ENCODE measurements at regions of chr20 and their contacts with region 1.

Region 1: DNA sequence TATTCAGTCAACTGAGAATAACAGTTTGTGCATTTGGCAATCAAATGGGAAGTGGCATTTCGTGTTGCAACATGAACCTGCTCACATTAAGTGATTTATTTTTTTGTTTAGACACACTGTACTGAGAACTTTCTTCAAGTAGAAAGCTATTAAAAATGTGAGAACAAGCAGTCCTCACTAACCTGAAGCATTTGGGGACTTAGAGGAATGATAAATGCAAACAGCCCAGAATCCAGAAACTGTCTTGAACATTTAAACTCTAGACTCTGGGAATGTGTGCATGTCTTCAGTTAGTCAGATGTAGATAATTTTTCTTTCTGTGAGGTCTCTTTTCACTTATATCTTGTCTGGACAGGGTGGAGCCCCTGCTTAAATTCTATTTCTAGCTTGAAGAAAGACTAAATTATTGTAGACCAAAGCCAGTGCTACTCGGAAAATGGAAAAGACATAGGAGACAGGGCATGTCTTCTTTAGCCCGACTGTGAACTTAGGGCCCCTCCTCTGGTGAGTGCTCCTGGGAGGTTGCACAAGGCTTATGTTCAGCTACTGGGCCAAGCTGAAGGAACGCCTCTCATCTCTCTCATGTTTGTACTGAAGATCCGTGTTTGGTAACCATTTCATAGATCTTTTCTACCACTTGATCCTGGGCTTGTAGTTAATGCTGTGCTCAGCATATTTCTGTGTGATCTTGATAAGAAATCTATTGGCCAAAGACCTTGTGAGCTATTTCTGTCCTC is 70.1 kb downstream of the SLX4IP start:
- DNase-seq: peak; percentile 74
- H3K4me3 Mint-ChIP-seq: peak overlapping the region; percentile 52
- H3K27ac Mint-ChIP-seq: peak overlapping the region; percentile 89
- H3K4me1 Mint-ChIP-seq: peaks cover 67% of the 10 kb centered on the region
- H3K27me3 Mint-ChIP-seq: no peaks in the 10 kb centered on the region
- CTCF ChIP-seq: no peak

Region 2: DNA sequence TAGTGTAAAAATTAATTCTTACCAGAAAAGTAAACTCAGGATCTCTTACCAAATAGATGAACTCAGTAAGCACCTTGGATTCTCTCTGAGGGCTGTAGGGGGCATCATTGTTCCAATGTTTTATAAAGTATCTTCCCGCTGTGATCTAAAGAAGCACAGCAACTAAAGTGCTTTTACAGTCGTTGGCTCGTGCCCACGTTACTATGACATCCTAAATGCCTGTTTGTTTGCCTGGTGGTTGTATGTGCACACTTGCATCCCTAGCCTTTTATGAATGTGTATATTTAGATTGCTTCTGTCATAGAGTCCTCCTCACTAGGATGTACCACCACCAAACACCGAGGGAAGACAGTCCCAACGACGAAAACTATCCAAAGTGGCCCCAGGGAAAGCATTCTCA is 35.6 kb before region 1 on chr20:
- CTCF ChIA-PET with region 1: interaction called, 6 read pairs
- POLR2A ChIA-PET with region 1: interaction called, 13 read pairs
- intact Hi-C with region 1: no loop called
- DNase-seq: peak; percentile 81
- H3K4me3 Mint-ChIP-seq: no peak overlapping the region
- H3K27ac Mint-ChIP-seq: peak overlapping the region; percentile 59
- H3K4me1 Mint-ChIP-seq: peaks cover 13% of the 10 kb centered on the region
- H3K27me3 Mint-ChIP-seq: no peaks in the 10 kb centered on the region
- CTCF ChIP-seq: peak; percentile 61

Region 3: DNA sequence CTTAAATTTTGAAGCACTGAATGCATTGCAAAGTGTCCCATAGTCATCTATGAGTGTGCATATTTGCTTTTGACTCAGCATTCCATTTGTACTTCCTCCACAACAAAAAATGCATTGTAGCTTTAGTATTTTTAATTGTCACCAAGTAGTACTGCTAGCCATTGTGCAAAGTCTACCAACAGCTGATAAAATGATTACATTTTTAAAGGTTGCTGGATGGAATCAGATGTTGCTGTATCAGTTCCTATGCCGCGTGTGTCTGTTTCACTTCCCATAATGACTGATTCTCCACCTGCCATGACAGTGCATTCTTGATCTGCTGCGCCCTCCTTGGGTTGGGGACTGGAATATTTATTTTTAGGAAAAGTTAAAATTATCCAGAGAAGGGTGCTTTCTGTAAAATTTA is 28.8 kb before region 1 on chr20:
- CTCF ChIA-PET with region 1: interaction called, 12 read pairs
- POLR2A ChIA-PET with region 1: interaction called, 7 read pairs
- intact Hi-C with region 1: no loop called
- DNase-seq: no peak
- H3K4me3 Mint-ChIP-seq: no peak overlapping the region
- H3K27ac Mint-ChIP-seq: no peak overlapping the region
- H3K4me1 Mint-ChIP-seq: no peaks in the 10 kb centered on the region
- H3K27me3 Mint-ChIP-seq: no peaks in the 10 kb centered on the region
- CTCF ChIP-seq: no peak

Region 4: DNA sequence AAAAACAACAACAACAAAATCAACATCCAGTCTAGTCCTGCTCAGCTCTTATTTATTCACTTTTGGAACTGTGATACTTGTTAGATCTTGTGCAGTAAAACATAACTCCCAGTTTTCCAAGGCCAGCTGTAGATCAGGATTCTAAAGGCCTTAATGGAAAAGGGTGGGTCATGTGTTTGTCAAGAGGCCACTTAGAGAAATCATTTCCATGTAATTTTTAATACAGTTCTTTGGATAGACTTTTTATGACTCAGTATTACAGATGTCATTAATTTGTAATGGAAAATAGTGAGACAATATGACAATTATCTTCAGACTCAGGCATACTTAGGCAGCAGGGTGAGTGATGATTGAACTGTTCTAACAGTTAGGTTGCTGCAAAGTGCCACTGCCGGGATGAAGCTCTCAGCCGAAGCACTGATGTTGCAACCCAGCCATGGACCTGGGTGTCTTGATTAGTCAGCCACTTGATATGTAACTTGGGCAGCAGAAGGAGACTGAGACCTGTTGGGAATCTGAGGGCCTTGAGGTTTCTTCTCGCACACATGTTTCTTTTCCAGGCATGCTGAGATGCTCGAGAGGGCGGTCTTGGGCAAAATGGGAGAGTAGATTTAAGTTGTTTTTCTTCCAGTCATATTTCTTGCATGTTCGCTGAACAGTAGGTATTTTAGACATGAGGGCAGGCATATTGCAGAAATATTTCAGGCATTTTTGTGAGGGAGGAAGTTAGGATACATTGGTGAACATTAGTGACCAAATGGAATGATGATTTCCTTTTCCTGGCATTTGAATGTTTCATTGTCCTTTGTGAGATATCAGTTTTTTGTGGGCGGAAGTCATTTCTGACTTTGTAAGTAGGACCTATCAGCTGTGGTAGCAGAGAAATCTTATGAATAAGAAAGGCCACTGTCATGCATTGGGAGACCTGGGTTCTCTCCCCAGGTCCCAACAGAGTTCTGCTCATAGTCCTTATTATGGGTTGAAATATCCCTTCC is 17.7 kb before region 1 on chr20:
- CTCF ChIA-PET with region 1: interaction called, 3 read pairs
- POLR2A ChIA-PET with region 1: interaction called, 33 read pairs
- intact Hi-C with region 1: no loop called
- DNase-seq: peak; percentile 43
- H3K4me3 Mint-ChIP-seq: no peak overlapping the region
- H3K27ac Mint-ChIP-seq: no peak overlapping the region
- H3K4me1 Mint-ChIP-seq: peaks cover 16% of the 10 kb centered on the region
- H3K27me3 Mint-ChIP-seq: no peaks in the 10 kb centered on the region
- CTCF ChIP-seq: no peak

Region 5: DNA sequence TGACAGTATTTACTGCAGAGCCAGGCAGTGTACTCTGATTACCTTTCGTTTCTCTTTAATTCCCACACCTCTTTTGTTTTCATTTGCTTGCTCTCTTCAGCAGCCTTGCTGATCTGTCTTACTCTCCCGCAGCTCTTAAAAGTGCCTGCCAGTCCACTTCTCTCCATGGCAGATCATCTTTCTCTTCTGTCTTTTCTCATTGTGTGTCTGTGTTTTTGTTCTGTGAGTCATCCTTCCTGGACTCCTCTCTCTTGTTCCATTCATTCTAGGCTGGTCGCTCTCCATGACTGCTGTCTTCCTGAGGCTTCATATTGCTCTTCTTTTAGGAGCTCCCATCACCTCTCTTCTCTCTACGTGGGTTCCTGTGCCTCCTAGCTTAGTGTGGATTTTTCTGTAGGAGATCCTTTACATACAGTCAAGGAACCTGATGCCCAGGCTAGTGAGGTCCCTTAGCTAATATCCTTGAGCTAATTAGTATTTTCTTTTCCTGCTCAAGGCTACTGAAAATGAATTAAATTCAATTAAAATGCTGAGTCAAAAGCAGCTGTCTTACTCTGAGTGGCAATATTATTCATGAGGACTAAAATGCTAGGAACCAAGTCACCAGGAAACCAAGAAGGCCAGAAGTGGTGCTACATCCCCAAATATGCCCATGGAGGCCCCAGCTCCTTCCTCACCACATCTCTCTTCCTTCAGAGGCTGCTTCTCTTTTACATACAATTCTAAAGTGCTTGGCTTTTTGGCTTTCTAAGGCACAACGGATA is 16.1 kb after region 1 on chr20:
- CTCF ChIA-PET with region 1: interaction called, 6 read pairs
- POLR2A ChIA-PET with region 1: interaction called, 117 read pairs
- intact Hi-C with region 1: no loop called
- DNase-seq: peak; percentile 86
- H3K4me3 Mint-ChIP-seq: peak overlapping the region; percentile 24
- H3K27ac Mint-ChIP-seq: peak overlapping the region; percentile 83
- H3K4me1 Mint-ChIP-seq: peaks cover 61% of the 10 kb centered on the region
- H3K27me3 Mint-ChIP-seq: no peaks in the 10 kb centered on the region
- CTCF ChIP-seq: no peak

Region 6: DNA sequence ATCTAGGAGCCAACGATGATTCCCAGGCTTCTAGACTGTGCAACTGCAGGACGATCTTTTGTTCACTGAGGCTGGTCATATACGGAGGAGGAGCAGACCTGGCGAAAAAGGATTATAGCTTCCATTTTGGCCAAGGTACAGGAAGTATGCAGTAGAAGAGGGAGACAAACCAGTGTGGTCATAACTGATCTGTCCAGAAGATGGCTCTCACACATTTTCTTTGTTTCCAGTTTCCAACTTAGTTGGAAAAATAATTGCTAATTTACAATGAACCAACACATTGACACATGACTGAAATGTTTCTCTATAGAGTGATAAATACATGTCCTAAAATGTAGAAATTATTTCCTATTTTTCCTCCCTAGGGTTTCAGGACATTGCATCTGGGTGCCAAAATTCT is 1048.4 kb after region 1 on chr20:
- CTCF ChIA-PET with region 1: no interaction called
- POLR2A ChIA-PET with region 1: no interaction called
- intact Hi-C with region 1: no loop called
- DNase-seq: peak; percentile 30
- H3K4me3 Mint-ChIP-seq: no peak overlapping the region
- H3K27ac Mint-ChIP-seq: no peak overlapping the region
- H3K4me1 Mint-ChIP-seq: peaks cover 20% of the 10 kb centered on the region
- H3K27me3 Mint-ChIP-seq: no peaks in the 10 kb centered on the region
- CTCF ChIP-seq: peak; percentile 15

Measured in MCF 10A (cell line).